ENCODE measurements at regions of chr13 and their contacts with region 1.

Region 1: GRCh38 chr13:32581177-32581786 is 5.0 kb upstream of the PDS5B start:
- DNase-seq: no peak
- ATAC-seq: no peak
- H3K4me3 ChIP-seq: no peak overlapping the region
- H3K27ac ChIP-seq: no peak overlapping the region
- H3K4me1 ChIP-seq: peaks cover 4% of the 10 kb centered on the region; the same call in 1 of the 2 replicates
- H3K27me3 ChIP-seq: no peaks in the 10 kb centered on the region
- CTCF ChIP-seq: peak; percentile 40 to 63 (median 46); a peak in 5 of 6 replicates
- EP300 ChIP-seq: no peak
- POLR2A ChIP-seq: no peak
- RAD21 ChIP-seq: peak; percentile 60

Region 2: DNA sequence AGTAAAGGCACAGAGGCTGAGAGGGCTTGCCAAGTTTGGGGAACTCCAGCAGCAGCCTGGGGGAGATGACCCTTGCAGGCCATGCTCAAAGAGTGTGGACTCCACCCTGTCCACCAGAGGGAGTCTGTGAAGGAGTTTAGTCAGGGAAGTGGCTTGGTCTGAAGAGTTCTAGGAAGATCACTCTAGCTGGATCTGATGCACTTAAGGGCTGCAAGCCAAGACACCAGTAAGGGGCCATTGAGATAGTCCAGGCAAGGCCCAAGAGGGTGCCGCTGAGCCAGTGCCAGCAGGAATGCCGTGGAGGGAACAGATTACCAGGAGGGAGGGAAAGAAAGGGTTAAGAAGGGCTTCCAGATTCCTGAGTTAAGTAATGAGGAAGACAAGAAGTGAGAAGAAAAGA is 334.8 kb before region 1 on chr13:
- CTCF ChIA-PET with region 1: interaction called, 17 read pairs
- POLR2A ChIA-PET with region 1: no interaction called
- RAD21 ChIA-PET with region 1: interaction called, 8 read pairs
- SMC1A ChIA-PET with region 1: interaction called, 7 read pairs
- in situ Hi-C with region 1: no loop called
- intact Hi-C with region 1: loop called (anchors 5 kb)
- DNase-seq: no peak
- ATAC-seq: peak; percentile 98
- H3K4me3 ChIP-seq: no peak overlapping the region
- H3K27ac ChIP-seq: no peak overlapping the region
- H3K4me1 ChIP-seq: peaks cover 9% of the 10 kb centered on the region
- H3K27me3 ChIP-seq: no peaks in the 10 kb centered on the region
- CTCF ChIP-seq: peak; percentile 68 to 81 (median 73)
- EP300 ChIP-seq: no peak
- POLR2A ChIP-seq: no peak
- RAD21 ChIP-seq: peak; percentile 55

Region 3: GRCh38 chr13:32381539-32381938 is 199.7 kb before region 1 on chr13:
- CTCF ChIA-PET with region 1: interaction called, 51 read pairs
- POLR2A ChIA-PET with region 1: no interaction called
- RAD21 ChIA-PET with region 1: interaction called, 27 read pairs
- SMC1A ChIA-PET with region 1: interaction called, 22 read pairs
- in situ Hi-C with region 1: no loop called
- intact Hi-C with region 1: loop called (anchors 1 kb)
- DNase-seq: no peak
- ATAC-seq: peak; percentile 53
- H3K4me3 ChIP-seq: no peak overlapping the region
- H3K27ac ChIP-seq: no peak overlapping the region
- H3K4me1 ChIP-seq: no peaks in the 10 kb centered on the region
- H3K27me3 ChIP-seq: no peaks in the 10 kb centered on the region
- CTCF ChIP-seq: peak; percentile 56 to 71 (median 61); a peak in 5 of 6 replicates
- EP300 ChIP-seq: no peak
- POLR2A ChIP-seq: no peak
- RAD21 ChIP-seq: peak; percentile 75

Region 4: DNA sequence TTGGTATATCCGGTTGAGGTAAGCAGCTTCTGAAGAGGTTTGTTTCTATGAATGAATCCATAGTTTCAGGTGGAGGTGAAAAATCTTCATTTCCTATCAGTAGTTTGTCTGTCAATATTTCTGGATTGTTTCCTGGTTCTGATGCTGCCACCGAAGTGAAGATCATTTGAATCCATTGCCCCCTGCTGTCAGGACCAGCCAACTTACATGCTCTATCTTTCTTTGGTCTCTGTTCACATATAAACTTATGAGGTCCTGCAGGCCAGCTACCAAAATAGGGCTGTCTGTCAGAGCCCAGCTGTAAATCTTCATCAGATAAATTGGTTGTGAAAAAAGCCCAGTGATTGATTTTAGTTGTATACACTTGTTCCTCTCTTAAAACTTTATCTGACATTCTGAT is 138.2 kb before region 1 on chr13:
- CTCF ChIA-PET with region 1: interaction called, 10 read pairs
- POLR2A ChIA-PET with region 1: no interaction called
- RAD21 ChIA-PET with region 1: interaction called, 3 read pairs
- SMC1A ChIA-PET with region 1: interaction called, 6 read pairs
- in situ Hi-C with region 1: no loop called
- intact Hi-C with region 1: no loop called
- DNase-seq: peak; percentile 60
- ATAC-seq: peak; percentile 93
- H3K4me3 ChIP-seq: no peak overlapping the region
- H3K27ac ChIP-seq: peak overlapping the region; percentile 62
- H3K4me1 ChIP-seq: peaks cover 15% of the 10 kb centered on the region
- H3K27me3 ChIP-seq: no peaks in the 10 kb centered on the region
- CTCF ChIP-seq: peak; percentile 55 to 62 (median 57); a peak in 5 of 6 replicates
- EP300 ChIP-seq: no peak
- POLR2A ChIP-seq: no peak
- RAD21 ChIP-seq: peak; percentile 67

Region 5: DNA sequence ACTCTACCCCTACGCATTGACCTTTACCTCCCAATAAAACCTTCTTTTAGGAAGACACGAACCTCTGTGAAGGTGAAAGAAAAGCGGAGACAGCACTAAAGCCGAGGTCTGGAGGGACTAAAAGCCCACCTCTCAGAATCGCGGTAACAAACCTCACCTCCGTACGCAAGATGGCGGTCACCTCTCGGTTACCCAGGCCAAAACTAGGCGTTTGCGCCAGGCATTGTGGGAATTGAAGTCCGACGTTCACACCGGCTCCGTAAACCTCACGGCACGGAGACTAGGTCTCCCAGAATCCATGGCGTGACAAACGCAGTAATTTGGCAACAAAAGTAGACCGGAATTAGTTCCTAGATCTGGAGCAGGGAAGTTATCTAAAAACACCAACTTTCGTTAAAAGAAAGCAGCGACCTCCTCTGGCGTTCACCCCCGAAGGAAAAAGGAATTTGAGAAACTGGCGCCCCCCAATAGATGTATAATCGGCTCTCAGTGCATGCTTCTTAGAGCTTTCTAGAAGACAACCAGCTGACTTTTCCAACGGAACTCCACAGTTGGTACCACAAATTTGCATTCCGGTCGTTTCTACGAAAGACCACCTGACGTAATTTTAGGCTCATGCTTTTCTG is 42.5 kb before region 1 on chr13 and contains the start of gene N4BP2L2:
- CTCF ChIA-PET with region 1: interaction called, 5 read pairs
- POLR2A ChIA-PET with region 1: no interaction called
- RAD21 ChIA-PET with region 1: no interaction called
- SMC1A ChIA-PET with region 1: interaction called, 12 read pairs
- in situ Hi-C with region 1: no loop called
- intact Hi-C with region 1: no loop called
- DNase-seq: peak; percentile 94
- ATAC-seq: peak; percentile 95
- H3K4me3 ChIP-seq: peak within 1 kb of the TSS; percentile 94
- H3K27ac ChIP-seq: peak within 1 kb of the TSS; percentile 100
- H3K4me1 ChIP-seq: peaks cover 5% of the 10 kb centered on the region; the same call in 1 of the 2 replicates
- H3K27me3 ChIP-seq: no peaks in the 10 kb centered on the region
- CTCF ChIP-seq: peak; percentile 12 to 47 (median 13); a peak in 3 of 6 replicates
- EP300 ChIP-seq: 0 out of 4 replicates have a peak, but pooled peaks of 1 of the 2 experiments have one; percentile 13
- POLR2A ChIP-seq: peak; percentile 85
- RAD21 ChIP-seq: peak; percentile 39; the same call in 1 of the 2 replicates
- polyA plus RNA-seq, gene N4BP2L2: 41.7 to 59.8 TPM

Region 6: GRCh38 chr13:32639502-32640105 is 58.3 kb after region 1 on chr13:
- CTCF ChIA-PET with region 1: interaction called, 14 read pairs
- POLR2A ChIA-PET with region 1: interaction called, 11 read pairs
- RAD21 ChIA-PET with region 1: interaction called, 17 read pairs
- SMC1A ChIA-PET with region 1: interaction called, 12 read pairs
- in situ Hi-C with region 1: no loop called
- intact Hi-C with region 1: loop called (anchors 1 kb)
- DNase-seq: peak; percentile 15
- ATAC-seq: peak; percentile 91
- H3K4me3 ChIP-seq: no peak overlapping the region
- H3K27ac ChIP-seq: no peak overlapping the region
- H3K4me1 ChIP-seq: peaks cover 9% of the 10 kb centered on the region
- H3K27me3 ChIP-seq: no peaks in the 10 kb centered on the region
- CTCF ChIP-seq: peak; percentile 74 to 83 (median 75)
- EP300 ChIP-seq: no peak
- POLR2A ChIP-seq: no peak
- RAD21 ChIP-seq: peak; percentile 73

Region 7: DNA sequence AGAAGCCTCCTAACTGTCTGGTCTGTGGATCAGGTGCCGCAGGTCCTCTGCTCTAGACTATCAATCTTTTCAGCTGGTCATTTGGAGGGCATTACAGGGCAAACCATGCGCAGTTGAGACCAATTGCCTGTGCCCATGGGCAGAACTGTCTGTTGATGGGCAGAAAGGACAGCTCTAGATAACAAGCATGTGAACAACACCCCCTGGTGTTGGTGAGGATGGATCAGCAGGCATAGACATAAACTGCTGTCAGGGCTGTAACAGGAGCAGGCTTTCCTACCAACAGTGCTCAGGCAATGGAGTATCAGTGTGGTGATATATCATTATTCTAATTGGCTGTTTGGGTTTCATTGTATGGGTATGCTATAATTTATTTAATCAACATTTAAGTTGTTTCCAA is 330.2 kb after region 1 on chr13:
- CTCF ChIA-PET with region 1: interaction called, 10 read pairs
- POLR2A ChIA-PET with region 1: no interaction called
- RAD21 ChIA-PET with region 1: interaction called, 10 read pairs
- SMC1A ChIA-PET with region 1: no interaction called
- in situ Hi-C with region 1: no loop called
- intact Hi-C with region 1: loop called (anchors 5 kb)
- DNase-seq: no peak
- ATAC-seq: peak; percentile 99
- H3K4me3 ChIP-seq: no peak overlapping the region
- H3K27ac ChIP-seq: no peak overlapping the region
- H3K4me1 ChIP-seq: no peaks in the 10 kb centered on the region
- H3K27me3 ChIP-seq: no peaks in the 10 kb centered on the region
- CTCF ChIP-seq: peak; percentile 55 to 71 (median 71)
- EP300 ChIP-seq: no peak
- POLR2A ChIP-seq: no peak
- RAD21 ChIP-seq: peak; percentile 85